ENCODE measurements at regions of chr16 and their contacts with region 1.

Region 1: DNA sequence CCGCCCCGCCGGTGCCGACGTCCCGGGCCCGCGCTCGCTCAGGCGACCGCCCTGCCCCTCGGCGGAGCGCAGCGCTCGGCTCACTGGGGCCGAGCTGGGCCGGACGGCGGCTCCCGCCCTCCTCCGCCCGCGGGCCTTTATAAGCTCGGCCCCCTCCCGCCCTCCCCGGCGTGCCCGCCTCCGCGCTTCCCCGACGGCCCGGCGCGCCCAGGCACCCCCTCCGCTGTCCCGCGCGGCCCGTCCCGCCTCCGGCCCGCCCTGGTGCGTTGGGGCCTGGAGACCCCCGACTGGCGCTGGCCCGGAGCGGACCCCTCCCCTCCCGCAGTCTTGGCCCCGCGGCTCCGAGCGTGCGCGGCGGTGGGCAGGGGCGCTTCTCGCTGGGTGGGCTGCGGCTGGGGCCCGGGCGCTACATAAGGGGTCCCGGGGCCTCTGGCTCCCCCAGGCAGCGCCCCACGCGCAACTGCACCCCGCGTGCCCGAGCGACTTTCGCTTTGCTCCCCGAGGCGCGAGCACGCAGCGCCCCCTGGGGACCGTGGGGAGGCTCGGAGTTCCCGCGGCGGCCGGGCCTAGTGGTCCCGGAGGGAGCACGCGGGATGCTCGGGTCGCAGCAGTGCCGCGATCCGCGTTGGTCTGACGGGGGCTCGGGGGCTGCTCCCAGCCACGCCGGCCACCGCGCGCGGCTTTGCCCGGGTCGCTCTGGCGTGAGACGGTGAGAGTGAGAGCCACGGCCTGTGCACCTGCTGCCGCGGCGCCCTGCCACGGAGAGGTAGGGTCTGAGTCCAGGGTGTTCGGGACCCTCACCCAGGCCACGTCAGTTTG is at the start of gene PIEZO1:
- DNase-seq: peak; percentile 90
- ATAC-seq: peak; percentile 41
- H3K4me3 Mint-ChIP-seq: peak within 1 kb of the TSS; percentile 75
- H3K27ac Mint-ChIP-seq: peak within 1 kb of the TSS; percentile 90
- H3K4me1 Mint-ChIP-seq: peaks cover 42% of the 10 kb centered on the region
- H3K27me3 Mint-ChIP-seq: no peaks in the 10 kb centered on the region
- total RNA-seq, gene PIEZO1: 206 to 220 TPM

Region 2: GRCh38 chr16:88706288-88706964 is 78.9 kb before region 1 on chr16 and contains the starts of genes CTU2 and RNF166:
- POLR2A ChIA-PET with region 1: interaction called, 15 read pairs
- DNase-seq: peak; percentile 99
- ATAC-seq: peak; percentile 56
- H3K4me3 Mint-ChIP-seq: peak within 1 kb of the TSS; percentile 96
- H3K27ac Mint-ChIP-seq: peak within 1 kb of the TSS; percentile 98
- H3K4me1 Mint-ChIP-seq: peaks cover 21% of the 10 kb centered on the region
- H3K27me3 Mint-ChIP-seq: no peaks in the 10 kb centered on the region
- total RNA-seq, gene CTU2: 22.8 to 25.7 TPM
- total RNA-seq, gene RNF166: 227 to 229 TPM

Region 3: DNA sequence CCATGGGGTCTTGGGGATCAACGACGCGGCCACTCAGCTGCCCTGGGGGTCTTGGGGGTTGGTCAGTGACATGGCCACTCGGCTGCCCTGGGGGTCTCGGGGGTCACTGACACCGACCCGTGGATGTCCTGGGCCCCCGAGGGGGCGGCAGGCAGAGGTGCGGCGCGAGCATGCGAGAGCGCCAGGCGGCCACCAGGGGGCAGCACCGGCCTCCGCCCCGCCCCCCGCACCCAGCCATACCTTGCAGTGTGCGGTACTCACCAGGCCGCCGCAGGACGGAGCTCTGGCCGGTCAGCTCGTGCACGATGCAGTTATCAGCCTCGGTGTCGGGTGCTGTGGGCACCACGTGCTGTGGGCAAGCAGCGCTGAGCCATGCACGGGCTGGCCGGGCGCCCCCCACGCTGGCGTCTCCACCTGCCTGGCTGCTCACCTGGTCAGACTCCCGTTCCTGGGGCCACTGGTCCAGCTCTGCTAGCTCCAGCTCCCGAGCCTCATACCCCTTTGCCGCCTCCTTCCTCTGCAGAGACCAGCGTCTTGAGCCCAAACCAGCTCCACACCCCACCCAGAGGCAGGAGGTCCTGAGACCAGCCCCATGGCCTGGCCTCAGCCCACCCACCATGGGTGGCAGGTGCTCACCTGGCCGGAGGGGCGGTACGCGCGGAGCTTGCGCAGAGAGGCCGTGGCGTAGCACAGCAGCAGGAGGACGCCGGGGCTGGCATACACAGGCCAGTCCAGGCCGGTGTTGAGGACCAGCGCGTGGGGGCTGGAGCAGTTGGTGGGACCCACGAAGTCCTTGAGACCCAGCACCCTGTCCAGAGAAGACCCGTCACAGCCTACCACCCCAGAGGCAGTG is 47.8 kb before region 1 on chr16:
- POLR2A ChIA-PET with region 1: interaction called, 10 read pairs
- DNase-seq: peak; percentile 84
- ATAC-seq: peak; percentile 90
- H3K4me3 Mint-ChIP-seq: no peak overlapping the region
- H3K27ac Mint-ChIP-seq: no peak overlapping the region
- H3K4me1 Mint-ChIP-seq: no peaks in the 10 kb centered on the region
- H3K27me3 Mint-ChIP-seq: no peaks in the 10 kb centered on the region

Region 4: DNA sequence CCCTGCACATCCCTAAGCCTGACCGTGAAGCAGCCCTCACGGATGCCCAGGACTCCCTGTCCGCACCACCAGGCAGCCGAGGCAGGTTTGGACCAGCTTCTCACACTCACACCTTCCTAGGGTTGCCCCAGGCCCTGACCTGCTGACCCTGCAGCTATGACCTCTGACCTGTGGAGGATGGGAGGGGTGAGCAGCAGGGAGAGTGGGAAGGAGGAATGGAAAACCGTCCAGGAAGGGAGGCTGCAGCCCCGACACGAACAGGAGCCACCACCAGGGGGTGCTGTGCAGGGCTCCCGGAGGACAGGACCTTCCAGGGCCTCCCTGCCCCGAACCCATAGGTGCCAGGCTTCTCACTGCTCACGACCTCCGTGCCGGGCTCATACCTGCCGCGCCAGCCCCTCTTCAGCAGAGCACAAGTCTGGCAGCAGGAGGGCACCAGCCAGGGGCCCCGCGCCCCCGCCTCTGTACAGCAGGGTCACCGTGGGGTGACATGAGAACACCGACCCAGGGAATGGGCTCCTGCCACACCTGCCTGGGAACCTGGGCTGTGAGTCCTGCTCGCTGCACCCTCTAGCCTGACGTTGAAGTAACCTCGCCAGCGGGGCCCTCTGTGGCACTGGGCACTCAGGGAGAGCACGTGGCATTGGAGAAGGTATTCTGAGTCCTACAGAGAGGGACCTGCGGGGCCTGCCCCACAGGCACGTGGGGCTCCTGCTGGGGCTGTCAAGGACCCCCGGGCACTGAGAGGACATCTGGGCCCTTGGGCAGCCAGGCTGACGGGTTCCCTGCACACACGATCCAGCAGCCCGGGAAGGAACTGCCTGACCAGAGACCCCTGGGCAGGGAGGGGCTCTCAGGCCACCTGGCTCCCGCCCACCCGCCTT is 41.4 kb before region 1 on chr16:
- POLR2A ChIA-PET with region 1: interaction called, 25 read pairs
- DNase-seq: peak; percentile 81
- ATAC-seq: no peak
- H3K4me3 Mint-ChIP-seq: no peak overlapping the region
- H3K27ac Mint-ChIP-seq: no peak overlapping the region
- H3K4me1 Mint-ChIP-seq: peaks cover 18% of the 10 kb centered on the region
- H3K27me3 Mint-ChIP-seq: no peaks in the 10 kb centered on the region

Region 5: GRCh38 chr16:88803264-88803987 is 18.1 kb after region 1 on chr16 and contains the start of gene CDT1:
- POLR2A ChIA-PET with region 1: interaction called, 13 read pairs
- DNase-seq: peak; percentile 97
- ATAC-seq: peak; percentile 45
- H3K4me3 Mint-ChIP-seq: peak within 1 kb of the TSS; percentile 90
- H3K27ac Mint-ChIP-seq: peak within 1 kb of the TSS; percentile 89
- H3K4me1 Mint-ChIP-seq: peaks cover 23% of the 10 kb centered on the region
- H3K27me3 Mint-ChIP-seq: no peaks in the 10 kb centered on the region
- total RNA-seq, gene CDT1: 135 to 140 TPM

Region 6: DNA sequence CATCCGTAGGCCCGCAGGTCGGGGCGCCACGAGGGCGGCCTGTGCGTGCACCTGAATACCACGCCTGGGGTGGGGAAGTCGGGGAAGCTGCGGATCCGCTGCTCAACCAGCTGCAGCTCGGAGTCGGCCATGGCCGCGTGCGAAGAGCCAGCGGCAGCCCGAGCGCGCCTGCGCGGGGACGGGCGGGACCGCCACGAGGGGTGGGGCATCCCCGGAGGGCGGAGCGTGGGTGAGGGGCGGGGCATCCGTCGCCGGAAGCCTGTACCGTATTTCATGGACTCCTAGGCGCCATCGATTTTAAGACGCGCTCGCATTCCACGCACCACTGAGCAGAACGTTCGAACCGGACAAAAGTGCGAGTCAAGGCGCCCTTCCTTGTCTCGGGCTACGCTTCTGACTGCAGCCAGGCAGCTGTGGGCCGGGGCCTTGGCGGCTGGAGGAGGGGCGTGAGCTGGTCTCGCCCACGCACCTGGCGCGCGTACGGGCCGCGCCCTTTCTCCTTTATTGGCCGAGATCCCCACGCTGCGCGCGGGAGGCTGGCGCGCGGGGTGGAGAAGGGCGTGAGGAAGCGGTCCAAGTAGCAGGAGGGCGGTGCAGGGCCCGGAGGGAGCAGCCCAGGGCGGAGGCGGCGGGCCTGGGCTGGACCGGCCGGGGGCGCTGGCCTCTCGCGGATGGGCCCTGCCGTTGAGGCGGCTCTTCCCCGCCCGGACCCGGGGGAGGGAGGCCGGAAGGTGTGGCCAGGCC is 26.6 kb after region 1 on chr16 and contains the start of gene APRT:
- POLR2A ChIA-PET with region 1: interaction called, 31 read pairs
- DNase-seq: peak; percentile 100
- ATAC-seq: peak; percentile 71
- H3K4me3 Mint-ChIP-seq: peak within 1 kb of the TSS; percentile 96
- H3K27ac Mint-ChIP-seq: peak within 1 kb of the TSS; percentile 99
- H3K4me1 Mint-ChIP-seq: peaks cover 14% of the 10 kb centered on the region
- H3K27me3 Mint-ChIP-seq: no peaks in the 10 kb centered on the region
- total RNA-seq, gene APRT: 124 to 139 TPM

Measured in activated naive CD8-positive, alpha-beta T cell treated with anti-CD3 and anti-CD28 coated beads, Interleukin-2, amount 10 ng/mL, durations not matched to agents 7 days and 5 days (primary cell).